ENCODE measurements at regions of chr14 and their contacts with region 1.

Region 1: GRCh38 chr14:21352587-21352986 is 31.2 kb downstream of the SUPT16H start:
- DNase-seq: peak; percentile 47
- ATAC-seq: peak; percentile 52

Region 2: GRCh38 chr14:21233457-21234076 is 119.0 kb before region 1 on chr14:
- intact Hi-C with region 1: loop called (anchors 10 kb)
- DNase-seq: no peak
- ATAC-seq: no peak

Region 3: GRCh38 chr14:21317398-21317797 is 35.2 kb before region 1 on chr14:
- intact Hi-C with region 1: no loop called
- DNase-seq: no peak
- ATAC-seq: no peak

Region 4: GRCh38 chr14:21408147-21408546 is 55.6 kb after region 1 on chr14:
- intact Hi-C with region 1: loop called (anchors 5 kb)
- DNase-seq: no peak
- ATAC-seq: no peak

Measured in Right ventricle myocardium superior (tissue), 1 donor.